ENCODE measurements at regions of chr13 and their contacts with region 1.

Region 1: GRCh38 chr13:97109841-97110492 is 112.2 kb upstream of the MBNL2 start:
- DNase-seq: peak; percentile 85
- CTCF ChIP-seq: peak; percentile 89

Region 2: DNA sequence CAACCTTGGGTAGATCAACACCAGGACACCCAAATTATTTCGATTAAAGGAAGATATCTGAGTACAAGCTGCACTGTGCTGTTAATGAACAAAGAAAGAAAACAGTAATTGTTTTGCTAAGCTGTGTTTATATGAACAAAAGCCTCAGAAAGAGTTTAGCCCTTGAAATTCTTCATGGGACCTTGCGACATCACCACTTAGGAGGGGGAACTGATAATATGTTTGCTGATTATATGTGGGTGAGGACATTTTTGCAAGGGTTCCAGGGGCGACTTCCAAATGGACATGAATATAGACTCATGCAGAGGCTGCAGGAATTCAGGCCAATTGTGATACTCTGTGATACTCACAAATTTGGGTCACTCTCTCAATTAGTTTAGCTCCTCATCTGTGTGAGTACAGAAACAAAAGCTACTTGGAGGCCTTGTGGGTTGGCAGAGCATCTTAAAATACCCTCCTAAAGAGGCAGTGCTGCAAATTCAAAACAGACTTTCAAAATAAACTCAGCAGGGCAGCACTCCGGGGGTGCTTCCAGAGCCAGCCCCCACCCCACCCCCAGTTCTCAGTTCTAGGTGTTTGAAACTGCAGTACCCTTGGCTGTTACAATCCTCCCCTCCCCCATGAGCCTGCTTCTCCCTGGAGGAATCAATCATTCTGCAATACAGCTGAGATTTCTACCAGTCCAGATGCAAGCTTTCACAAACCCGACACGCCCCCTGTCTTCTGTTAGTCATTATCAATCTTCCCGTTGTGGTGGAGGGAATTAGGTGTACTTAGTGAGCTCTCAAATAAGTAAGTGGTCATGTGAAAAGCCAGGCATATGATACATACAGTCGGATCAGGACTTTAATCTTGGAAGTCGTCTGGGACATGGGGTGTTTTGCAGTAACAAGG is 15.2 kb after region 1 on chr13:
- CTCF ChIA-PET with region 1: interaction called, 31 read pairs
- POLR2A ChIA-PET with region 1: no interaction called
- DNase-seq: no peak
- CTCF ChIP-seq: no peak

Region 3: GRCh38 chr13:97160421-97160820 is 50.5 kb after region 1 on chr13:
- CTCF ChIA-PET with region 1: no interaction called
- POLR2A ChIA-PET with region 1: no interaction called
- DNase-seq: no peak
- CTCF ChIP-seq: no peak

Region 4: DNA sequence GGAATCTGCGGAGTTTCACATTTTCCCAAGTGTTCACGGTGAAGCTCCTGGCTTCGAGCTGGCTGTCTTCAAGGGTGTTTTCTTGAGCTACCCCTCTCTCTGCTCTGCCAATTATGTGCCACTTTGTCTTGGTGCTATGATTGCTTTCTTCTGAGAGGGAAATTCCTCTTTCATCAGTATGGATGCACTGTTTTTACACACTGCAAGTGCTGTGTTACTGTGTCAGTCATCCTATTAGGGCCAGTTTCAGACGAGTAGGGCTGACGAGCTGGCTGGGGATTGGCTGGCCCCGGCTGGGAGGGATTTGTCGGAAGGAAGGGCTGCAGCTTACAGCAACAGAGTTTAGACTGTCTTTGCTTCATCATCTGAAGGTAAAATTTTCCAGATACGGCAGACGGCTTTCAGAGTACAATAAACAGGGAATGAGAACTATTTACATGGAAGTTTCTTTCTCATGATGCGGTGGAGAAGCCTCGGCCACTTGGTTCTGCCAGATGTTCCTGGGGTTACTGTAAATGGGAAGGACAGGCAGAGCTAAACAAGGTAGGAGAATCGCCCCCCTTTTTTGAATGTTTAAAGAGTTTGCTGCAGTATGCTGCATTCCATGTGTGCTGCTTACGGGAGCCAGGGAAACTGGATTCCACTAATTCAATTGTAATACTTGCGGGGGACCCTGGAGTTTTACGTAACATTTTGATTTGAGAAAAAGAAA is 112.2 kb after region 1 on chr13 and contains the start of gene MBNL2:
- CTCF ChIA-PET with region 1: interaction called, 39 read pairs
- POLR2A ChIA-PET with region 1: no interaction called
- DNase-seq: peak; percentile 87
- CTCF ChIP-seq: no peak

Region 5: DNA sequence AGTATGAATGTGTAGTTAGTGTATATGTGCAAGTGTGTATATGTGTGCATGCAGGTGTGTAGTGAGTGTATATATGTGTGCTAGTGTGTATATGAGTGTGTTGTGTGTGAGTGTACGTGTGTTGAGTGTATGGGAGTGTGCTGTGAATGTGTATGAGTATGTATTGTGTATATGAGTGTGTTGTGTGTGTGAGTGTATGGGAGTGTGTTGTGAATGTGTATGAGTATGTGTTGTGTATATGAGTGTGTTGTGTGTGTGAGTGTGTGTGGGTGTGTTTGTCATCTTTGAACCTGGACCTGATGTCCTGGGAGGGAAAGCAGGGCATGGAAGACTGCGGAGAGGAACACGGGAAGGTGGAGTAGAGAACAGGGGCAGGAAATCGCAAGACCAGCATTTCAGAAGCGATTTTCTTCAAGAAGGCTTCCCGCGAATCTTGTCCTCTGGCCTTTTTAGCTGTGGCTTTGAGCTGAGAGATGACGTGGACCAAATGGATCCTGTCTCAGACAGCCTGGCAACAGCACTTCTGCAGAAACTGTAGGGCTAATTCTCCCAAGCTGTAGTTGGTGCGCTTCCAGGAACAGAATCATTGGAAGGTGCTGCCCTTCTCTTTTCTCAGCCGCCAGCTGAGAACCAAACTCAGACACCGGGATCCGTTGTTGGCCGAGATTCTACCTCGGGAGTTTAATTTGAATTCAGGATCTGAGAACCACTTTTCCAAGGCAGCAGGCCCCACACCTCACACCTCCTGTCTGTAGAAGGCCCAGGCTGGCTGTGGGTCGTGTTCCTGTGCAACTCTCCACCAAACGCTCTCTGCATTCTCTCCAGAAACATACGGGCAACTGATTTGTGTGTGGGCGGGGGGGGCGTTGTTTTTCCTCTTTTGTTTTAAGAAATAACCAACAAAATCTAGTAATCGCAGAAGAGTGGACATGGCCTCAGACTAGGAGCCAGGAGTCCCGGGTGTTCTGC is 229.3 kb after region 1 on chr13:
- CTCF ChIA-PET with region 1: interaction called, 44 read pairs
- POLR2A ChIA-PET with region 1: no interaction called
- DNase-seq: no peak
- CTCF ChIP-seq: no peak

Region 6: DNA sequence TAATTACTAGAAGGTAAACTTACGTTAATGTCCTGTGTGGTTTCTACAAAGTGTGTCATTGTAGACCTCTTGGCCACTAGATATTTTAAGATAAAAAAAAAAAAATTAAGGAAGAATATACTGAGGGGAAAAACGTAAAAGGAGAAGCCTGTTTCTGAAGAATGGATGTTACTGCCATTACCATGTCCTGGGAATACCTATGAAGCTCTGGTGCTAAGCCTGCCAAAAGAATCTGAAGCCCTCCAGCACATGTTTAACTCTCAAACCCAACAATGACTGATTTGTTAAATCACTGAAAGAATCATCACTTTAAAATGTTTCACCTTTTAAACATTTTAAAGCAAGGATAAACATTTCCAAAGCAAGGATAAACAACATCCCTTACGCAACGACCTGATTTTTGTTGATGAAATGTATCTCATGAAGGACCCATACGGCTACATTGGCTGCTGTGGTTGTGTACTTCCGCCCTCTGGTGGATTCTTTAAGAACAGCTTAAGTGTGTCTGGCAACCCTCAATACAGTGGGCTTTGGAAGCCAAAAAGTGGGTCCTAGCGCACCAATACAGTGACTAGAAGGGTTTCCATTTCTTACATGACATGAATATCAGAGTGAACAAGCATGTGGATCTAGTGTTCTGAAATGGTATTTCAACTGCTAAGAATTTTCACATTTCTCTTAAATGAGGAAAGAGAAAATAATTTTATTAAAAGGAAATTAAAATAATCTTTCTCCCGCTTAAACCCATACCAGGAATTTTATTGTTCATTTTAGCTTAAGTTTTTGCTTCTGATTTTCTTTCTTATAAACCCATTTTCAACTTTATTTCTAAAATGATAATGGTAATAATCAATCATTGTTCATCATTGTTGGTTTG is 249.5 kb after region 1 on chr13:
- CTCF ChIA-PET with region 1: interaction called, 237 read pairs
- POLR2A ChIA-PET with region 1: no interaction called
- DNase-seq: peak; percentile 37
- CTCF ChIP-seq: peak; percentile 78

Region 7: DNA sequence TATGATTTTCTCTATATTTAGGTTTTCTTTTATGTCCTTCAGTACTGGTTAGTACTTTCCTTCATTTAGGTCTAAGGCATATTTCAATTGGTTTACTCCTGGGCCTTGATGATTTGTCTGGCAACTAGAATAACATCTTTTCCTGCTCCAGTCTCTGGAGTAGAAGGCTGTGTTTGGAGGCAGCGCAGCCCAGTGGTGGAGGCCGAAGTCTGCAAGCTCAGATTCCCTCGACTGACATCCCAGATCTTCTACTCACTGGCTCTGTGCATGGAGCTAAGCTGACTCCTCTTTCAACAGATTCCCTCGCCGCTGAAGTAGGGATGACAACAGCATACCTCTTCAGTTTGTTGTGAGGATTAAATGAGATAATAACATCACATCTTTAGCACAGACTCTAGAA is 465.0 kb after region 1 on chr13:
- CTCF ChIA-PET with region 1: interaction called, 37 read pairs
- POLR2A ChIA-PET with region 1: no interaction called
- DNase-seq: peak; percentile 28
- CTCF ChIP-seq: peak; percentile 53